A673 (cell line): ENCODE measurements at regions of chr2 and their contacts with region 1.

Region 1: DNA sequence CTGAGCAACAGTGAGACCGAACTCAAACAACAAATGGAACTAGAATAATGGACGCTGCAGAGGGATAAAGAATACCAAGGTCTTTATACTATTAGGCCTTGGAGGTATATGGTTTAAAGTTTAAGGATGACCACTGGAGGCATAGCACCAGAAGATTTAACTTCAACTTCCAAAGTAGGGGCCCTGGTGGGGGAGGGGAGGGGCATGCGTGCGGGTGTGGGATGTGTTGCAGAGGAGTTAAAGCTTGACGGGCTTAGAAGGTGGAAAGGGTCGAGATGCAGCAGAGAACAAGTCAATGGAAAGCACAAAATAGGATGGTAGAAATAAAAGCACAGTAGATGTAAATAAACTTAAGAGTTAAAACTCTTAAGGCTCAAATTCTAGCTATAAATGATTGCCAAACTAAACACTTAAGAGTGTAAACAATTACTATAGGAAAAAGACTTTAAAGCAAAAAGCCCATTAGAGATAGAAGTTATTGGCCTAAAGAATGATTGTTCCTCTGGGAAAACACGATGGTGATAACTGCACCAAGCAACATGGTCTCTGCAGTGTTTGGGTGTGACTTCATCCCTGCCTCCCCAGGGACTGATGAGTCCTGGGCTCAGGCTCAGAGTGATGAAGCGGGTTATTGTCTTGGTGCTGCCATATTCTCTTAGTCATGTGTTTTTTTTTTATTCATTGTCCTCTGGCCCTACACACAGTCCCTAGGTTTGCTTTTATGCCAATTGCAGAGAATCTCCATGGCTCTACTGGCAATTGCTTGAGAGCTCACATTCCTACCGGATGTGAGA is 13.0 kb downstream of the RRM2 start:
- DNase-seq: peak; percentile 83
- H3K4me3 ChIP-seq: no peak overlapping the region
- H3K27ac ChIP-seq: no peak overlapping the region
- H3K4me1 ChIP-seq: no peaks in the 10 kb centered on the region
- H3K27me3 ChIP-seq: no peaks in the 10 kb centered on the region
- CTCF ChIP-seq: no peak

Region 2: GRCh38 chr2:9565436-9566153 is 569.9 kb before region 1 on chr2:
- CTCF ChIA-PET with region 1: no interaction called
- POLR2A ChIA-PET with region 1: no interaction called
- intact Hi-C with region 1: no loop called
- DNase-seq: peak; percentile 26
- H3K4me3 ChIP-seq: no peak overlapping the region
- H3K27ac ChIP-seq: no peak overlapping the region
- H3K4me1 ChIP-seq: no peaks in the 10 kb centered on the region
- H3K27me3 ChIP-seq: no peaks in the 10 kb centered on the region
- CTCF ChIP-seq: no peak

Region 3: DNA sequence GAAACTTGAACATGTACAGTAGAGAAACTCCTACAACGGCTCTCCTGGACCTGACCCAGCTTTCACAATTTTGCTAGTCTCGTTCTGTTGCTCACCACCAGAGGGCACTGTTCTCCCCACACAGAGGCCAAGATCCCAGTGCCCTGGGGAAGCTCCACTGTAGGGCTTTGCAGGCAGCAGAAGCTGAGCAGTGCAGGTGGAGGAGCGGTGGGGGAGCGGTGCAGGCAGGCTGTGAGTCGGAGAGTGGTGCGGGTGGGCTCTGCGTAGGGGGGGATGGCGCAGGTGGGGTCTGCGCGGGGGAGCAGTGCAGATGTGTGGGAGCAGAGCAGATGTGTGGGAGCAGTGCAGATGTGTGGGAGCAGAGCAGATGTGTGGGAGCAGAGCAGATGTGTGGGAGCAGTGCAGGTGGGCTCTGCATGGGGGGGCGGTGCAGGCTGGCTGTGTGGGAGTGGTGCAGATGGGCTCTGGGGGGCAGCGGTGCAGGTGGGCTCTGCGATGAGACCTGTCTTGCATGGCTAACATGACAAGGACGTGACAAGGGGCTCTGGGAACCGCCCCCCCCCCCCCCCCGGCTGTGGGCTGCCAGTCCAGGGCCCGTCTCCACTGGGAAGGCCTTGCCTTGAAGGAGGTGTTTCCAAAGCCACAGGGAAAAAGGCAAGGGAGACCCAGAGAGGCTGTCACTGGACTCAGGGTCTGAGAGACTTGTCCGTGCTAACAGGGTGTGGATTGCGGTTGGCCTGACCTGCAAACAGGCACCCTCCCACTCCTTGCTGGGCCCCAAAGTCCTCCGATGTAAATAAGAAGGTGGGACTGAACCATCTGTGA is 62.6 kb before region 1 on chr2:
- CTCF ChIA-PET with region 1: no interaction called
- POLR2A ChIA-PET with region 1: no interaction called
- intact Hi-C with region 1: no loop called
- DNase-seq: peak; percentile 91
- H3K4me3 ChIP-seq: no peak overlapping the region
- H3K27ac ChIP-seq: no peak overlapping the region
- H3K4me1 ChIP-seq: no peaks in the 10 kb centered on the region
- H3K27me3 ChIP-seq: peaks cover 30% of the 10 kb centered on the region
- CTCF ChIP-seq: peak; percentile 87

Region 4: GRCh38 chr2:10109311-10109710 is 26.2 kb before region 1 on chr2:
- CTCF ChIA-PET with region 1: no interaction called
- POLR2A ChIA-PET with region 1: no interaction called
- intact Hi-C with region 1: no loop called
- DNase-seq: no peak
- H3K4me3 ChIP-seq: no peak overlapping the region
- H3K27ac ChIP-seq: no peak overlapping the region
- H3K4me1 ChIP-seq: no peaks in the 10 kb centered on the region
- H3K27me3 ChIP-seq: no peaks in the 10 kb centered on the region
- CTCF ChIP-seq: no peak

Region 5: DNA sequence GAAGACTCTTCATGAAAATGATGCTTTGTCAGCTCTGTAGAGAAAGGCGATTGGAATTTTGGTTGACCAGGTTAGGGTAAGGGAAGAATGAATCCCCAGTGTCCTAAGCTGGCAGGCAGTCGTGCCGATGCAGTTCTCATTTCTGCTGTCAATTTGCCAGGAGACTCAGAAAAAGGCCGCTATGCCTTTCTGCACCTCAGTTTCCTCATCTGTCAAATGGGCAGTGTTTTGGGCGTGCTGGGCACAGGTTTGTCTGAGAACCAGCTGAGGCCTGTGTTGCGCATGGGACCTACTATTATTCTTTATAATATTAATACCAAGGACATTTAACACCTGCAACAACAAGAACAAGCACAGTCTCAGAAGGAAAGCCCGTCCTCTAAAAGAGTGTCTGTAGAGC is 217.5 kb after region 1 on chr2:
- CTCF ChIA-PET with region 1: no interaction called
- POLR2A ChIA-PET with region 1: interaction called, 10 read pairs
- intact Hi-C with region 1: no loop called
- DNase-seq: no peak
- H3K4me3 ChIP-seq: no peak overlapping the region
- H3K27ac ChIP-seq: no peak overlapping the region
- H3K4me1 ChIP-seq: no peaks in the 10 kb centered on the region
- H3K27me3 ChIP-seq: no peaks in the 10 kb centered on the region
- CTCF ChIP-seq: no peak

Region 6: DNA sequence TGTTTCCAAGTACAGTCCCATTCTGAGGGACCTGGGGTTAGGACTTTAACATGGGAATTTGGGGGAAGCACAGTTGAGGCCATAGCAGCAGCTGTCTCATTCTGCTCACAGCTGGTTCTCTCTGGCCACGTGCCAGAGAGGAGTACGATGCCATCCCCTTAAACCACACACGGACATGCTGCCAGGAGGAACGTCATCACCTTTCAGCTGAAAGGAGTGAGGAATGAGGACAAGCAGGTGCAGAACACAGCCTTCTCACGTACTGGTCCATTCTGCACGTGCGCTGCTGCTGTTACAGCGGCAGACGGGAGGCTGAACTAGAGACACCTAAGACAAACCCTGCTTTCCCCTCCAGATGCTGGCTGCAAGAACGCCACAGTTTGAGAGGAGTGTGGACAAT is 279.1 kb after region 1 on chr2:
- CTCF ChIA-PET with region 1: no interaction called
- POLR2A ChIA-PET with region 1: interaction called, 11 read pairs
- intact Hi-C with region 1: no loop called
- DNase-seq: no peak
- H3K4me3 ChIP-seq: no peak overlapping the region
- H3K27ac ChIP-seq: no peak overlapping the region
- H3K4me1 ChIP-seq: no peaks in the 10 kb centered on the region
- H3K27me3 ChIP-seq: no peaks in the 10 kb centered on the region
- CTCF ChIP-seq: no peak